ENCODE measurements at regions of chr7 and their contacts with region 1.

Region 1: DNA sequence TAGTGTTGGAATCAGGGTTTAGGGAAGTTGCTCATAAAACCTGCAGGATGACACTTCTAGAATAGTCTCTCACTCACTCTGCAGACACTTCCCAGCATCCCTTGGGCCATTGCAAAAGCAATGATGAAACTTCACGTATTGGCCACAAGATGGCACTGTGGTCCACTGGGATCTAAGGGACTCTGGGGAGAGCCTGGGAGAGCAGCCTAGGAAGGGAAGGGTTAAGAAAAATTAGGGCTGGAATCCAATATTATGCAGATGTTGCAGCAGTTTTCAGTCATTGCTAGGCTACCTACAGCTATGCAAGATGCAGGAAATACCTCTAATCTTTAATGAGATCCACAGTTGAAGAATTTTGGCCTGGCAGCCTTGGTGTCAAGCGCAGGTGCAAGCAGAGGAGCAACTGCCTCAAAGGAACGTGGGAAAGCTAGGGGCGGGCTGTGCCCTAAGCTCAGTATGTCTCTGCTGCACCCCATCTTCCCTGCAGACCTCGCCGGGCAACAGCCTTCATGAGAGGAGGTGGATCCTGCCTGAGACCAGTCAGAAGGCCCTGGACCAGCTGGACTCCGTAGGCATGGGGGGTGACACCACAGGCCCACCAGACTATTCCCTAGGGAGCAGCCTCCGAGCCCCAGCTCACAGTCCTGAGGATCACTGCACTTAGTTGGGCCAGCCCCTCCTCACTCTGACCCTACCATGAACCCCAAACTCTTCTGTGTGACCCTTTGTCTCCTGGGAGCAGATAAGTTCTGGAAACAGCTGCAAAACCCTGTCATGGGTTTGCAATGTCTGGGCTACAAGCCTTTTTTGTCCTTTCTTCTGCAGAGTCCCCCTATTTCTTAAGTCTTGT is 127.9 kb upstream of the PRSS58 start:
- DNase-seq: peak; percentile 82
- H3K4me3 Mint-ChIP-seq: peak overlapping the region; percentile 71
- H3K27ac Mint-ChIP-seq: peak overlapping the region; percentile 76
- H3K4me1 Mint-ChIP-seq: peaks cover 23% of the 10 kb centered on the region
- H3K27me3 Mint-ChIP-seq: peaks cover 3% of the 10 kb centered on the region

Region 2: GRCh38 chr7:142357953-142358520 is 27.7 kb before region 1 on chr7:
- intact Hi-C with region 1: loop called (anchors 2 kb)
- DNase-seq: peak; percentile 76
- H3K4me3 Mint-ChIP-seq: peak overlapping the region; percentile 23
- H3K27ac Mint-ChIP-seq: no peak overlapping the region
- H3K4me1 Mint-ChIP-seq: peaks cover 17% of the 10 kb centered on the region
- H3K27me3 Mint-ChIP-seq: peaks cover 32% of the 10 kb centered on the region

Region 3: GRCh38 chr7:143049362-143049761 is 663.6 kb after region 1 on chr7:
- intact Hi-C with region 1: no loop called
- DNase-seq: no peak
- H3K4me3 Mint-ChIP-seq: no peak overlapping the region
- H3K27ac Mint-ChIP-seq: no peak overlapping the region
- H3K4me1 Mint-ChIP-seq: peaks cover 2% of the 10 kb centered on the region
- H3K27me3 Mint-ChIP-seq: peaks cover 8% of the 10 kb centered on the region